Left ventricle myocardium inferior (tissue), 1 donor: ENCODE measurements at regions of chr10 and their contacts with region 1.

Region 1: GRCh38 chr10:2927958-2928840 is 139.1 kb upstream of the PFKP start:
- DNase-seq: peak; percentile 59
- H3K4me3 ChIP-seq: no peak overlapping the region
- H3K27ac ChIP-seq: no peak overlapping the region
- H3K4me1 ChIP-seq: peaks cover 5% of the 10 kb centered on the region
- H3K27me3 ChIP-seq: peaks cover 70% of the 10 kb centered on the region
- CTCF ChIP-seq: peak; percentile 80

Region 2: DNA sequence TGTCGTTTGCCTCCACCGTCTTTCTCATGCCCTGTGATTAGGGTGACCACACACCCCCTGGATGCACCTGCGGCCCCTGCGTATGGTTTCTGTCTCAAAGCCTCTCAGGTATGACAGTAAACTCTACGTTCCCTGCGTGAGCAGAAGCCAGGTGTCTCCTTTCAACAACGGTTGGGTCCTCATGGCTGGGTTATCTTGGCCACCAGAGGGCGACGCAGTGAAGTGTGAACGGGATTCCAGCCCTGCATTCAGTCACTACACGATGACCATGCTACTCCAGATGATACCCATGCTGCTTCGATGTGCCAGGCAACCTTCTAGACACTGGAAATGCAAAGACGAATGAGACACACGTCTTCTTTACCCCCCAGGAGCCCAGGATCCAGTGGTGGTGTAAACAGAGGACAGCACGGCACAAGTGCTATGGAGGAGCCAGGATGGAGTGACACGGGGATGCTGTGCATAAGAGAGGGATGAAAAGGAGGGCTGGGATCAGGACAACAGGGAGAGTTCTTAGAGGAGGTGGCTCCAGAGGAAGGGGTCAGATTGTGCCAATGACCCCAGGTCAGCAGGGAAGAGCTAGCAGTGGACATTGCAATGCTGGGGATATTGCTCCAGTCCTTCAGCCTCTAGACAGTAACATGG is 89.0 kb before region 1 on chr10:
- intact Hi-C with region 1: no loop called
- DNase-seq: peak; percentile 18
- H3K4me3 ChIP-seq: no peak overlapping the region
- H3K27ac ChIP-seq: no peak overlapping the region
- H3K4me1 ChIP-seq: no peaks in the 10 kb centered on the region
- H3K27me3 ChIP-seq: peaks cover 69% of the 10 kb centered on the region
- CTCF ChIP-seq: peak; percentile 60

Region 3: DNA sequence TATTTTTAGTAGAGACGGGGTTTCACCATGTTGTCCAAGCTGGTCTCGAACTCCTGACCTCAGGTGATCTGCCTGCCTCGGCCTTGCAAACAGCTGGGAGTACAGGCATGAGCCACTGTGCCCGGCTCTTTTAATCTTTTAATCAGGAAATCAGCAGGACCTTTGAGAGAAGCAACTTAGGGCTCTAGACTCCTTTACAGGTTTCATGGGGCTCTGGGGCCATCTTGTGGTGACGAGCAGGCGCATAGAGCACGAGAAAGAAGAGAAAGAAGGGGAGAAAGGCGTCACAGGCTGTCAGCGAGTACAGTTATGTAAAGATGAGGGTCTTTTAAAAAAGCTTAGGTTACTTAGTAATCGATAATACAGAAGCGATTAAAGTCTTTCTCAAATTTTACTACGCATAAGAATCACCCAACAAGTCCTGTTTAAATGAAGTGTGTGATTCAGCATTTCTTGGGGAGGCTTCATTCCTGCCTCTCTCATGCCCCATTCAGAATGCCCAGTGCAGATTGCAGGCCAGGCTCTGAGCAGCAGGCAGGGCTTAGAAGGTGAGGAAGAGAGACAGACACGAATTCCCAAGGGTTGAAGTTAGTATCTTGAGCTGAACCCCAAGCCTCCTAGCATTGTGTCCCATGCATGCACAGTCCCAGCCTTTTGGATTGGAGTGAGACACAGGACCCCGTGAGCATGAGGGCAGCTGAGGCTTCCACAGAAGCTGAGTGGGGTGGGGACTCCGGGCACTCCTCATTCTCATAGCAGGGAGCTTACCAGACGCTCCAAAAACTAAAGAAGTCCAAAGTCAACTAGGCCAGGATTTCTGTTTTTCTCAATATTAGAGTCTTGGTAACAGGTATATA is 115.5 kb after region 1 on chr10:
- intact Hi-C with region 1: loop called (anchors 10 kb)
- DNase-seq: peak; percentile 52
- H3K4me3 ChIP-seq: no peak overlapping the region
- H3K27ac ChIP-seq: peak overlapping the region; percentile 55
- H3K4me1 ChIP-seq: peaks cover 17% of the 10 kb centered on the region
- H3K27me3 ChIP-seq: peaks cover 1% of the 10 kb centered on the region
- CTCF ChIP-seq: peak; percentile 75